Dorsolateral prefrontal cortex (tissue), 120 donors: ENCODE measurements at regions of chr20 and their contacts with region 1.

Region 1: GRCh38 chr20:50575847-50576720 is 65.9 kb downstream of the PTPN1 start:
- DNase-seq: peak in 9 of 10 donors; percentile 54 to 79 (median 75)
- H3K4me3 ChIP-seq: no peak overlapping the region
- H3K27ac ChIP-seq: peak overlapping the region in 30 of 59 donors; percentile 15 to 79 (median 41)
- H3K27me3 ChIP-seq: no peaks in the 10 kb centered on the region
- CTCF ChIP-seq: peak; percentile 44 to 86 (median 74)

Region 2: GRCh38 chr20:50395258-50395729 is 180.8 kb before region 1 on chr20:
- intact Hi-C with region 1: loop called in 1 of 2 experiments (anchors 10 kb)
- DNase-seq: peak in 1 of 10 donors; percentile 52
- H3K4me3 ChIP-seq: no peak overlapping the region
- H3K27ac ChIP-seq: peak overlapping the region in 37 of 59 donors; percentile 6 to 82 (median 46)
- H3K27me3 ChIP-seq: no peaks in the 10 kb centered on the region
- CTCF ChIP-seq: no peak

Region 3: DNA sequence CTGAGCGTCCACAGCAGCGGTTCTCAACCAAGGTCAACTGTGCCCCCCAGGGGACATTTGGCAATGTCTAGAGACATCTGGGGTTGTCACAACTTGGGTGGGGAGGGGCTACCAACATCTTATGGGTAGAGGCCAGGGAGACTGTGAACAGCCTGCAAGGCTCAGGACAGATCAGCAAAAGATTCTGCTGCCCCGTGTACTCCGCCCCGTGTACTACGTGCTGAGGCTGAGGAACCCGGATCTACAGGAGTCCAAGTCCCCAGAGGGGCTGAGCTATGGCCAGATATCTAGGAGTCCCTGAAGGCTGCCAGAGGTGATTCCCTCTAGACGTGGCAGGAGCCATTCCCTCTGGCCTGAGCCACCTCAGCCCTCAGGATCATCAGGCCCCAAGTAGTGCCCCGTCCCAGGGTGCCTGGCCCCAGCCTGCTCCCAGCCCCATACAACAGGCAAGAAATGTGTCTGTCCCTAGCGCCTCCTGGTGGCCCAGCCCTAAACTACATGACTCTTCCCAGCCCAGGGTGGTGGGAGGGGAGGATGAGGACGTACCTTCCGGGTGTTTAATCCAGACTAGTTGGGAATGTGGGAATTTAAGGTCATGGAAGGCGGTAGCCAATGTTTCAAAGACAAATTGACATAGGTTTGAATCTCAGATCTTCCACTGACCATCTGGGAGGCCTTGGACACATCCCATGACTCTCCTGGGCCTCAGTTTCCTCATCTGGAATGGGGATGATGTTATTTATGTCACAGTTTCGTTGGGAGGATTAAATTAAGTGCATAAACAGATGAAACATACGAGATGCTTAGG is 115.4 kb before region 1 on chr20:
- intact Hi-C with region 1: loop called in 1 of 2 experiments (anchors 5 kb)
- DNase-seq: peak; percentile 25 to 87 (median 78)
- H3K4me3 ChIP-seq: no peak overlapping the region
- H3K27ac ChIP-seq: peak overlapping the region in 5 of 59 donors; percentile 9 to 53 (median 21)
- H3K27me3 ChIP-seq: no peaks in the 10 kb centered on the region
- CTCF ChIP-seq: peak; percentile 72 to 94 (median 88)

Region 4: DNA sequence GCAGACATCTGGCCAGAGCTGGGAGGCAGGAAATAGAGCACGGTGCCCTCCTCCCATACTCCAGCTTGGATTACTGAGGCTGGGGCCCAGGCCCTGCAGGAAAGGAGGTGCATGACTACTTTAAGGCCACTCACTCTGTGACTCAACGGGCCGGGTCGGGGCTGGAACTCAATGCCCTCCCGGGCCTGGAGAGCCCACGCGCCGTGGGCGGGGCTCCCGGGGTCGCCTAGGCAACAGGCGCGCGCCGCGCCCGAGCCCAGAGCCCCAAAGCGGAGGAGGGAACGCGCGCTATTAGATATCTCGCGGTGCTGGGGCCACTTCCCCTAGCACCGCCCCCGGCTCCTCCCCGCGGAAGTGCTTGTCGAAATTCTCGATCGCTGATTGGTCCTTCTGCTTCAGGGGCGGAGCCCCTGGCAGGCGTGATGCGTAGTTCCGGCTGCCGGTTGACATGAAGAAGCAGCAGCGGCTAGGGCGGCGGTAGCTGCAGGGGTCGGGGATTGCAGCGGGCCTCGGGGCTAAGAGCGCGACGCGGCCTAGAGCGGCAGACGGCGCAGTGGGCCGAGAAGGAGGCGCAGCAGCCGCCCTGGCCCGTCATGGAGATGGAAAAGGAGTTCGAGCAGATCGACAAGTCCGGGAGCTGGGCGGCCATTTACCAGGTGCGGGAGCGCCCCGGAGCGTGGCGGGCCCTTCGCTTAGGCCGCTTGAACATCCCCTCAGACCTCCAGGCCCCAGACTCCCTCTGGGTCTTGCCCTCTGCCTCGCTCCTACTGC is 66.0 kb before region 1 on chr20 and contains the start of gene PTPN1:
- intact Hi-C with region 1: loop called (anchors 2 to 5 kb)
- DNase-seq: peak; percentile 96 to 99 (median 98)
- H3K4me3 ChIP-seq: peak within 1 kb of the TSS; percentile 48 to 100 (median 98)
- H3K27ac ChIP-seq: peak within 1 kb of the TSS in 56 of 59 donors; percentile 0 to 96 (median 76)
- H3K27me3 ChIP-seq: no peaks in the 10 kb centered on the region
- CTCF ChIP-seq: peak in 34 of 56 donors; percentile 5 to 58 (median 28)
- total RNA-seq, gene PTPN1: 15.9 to 29.2 (median 22.0) TPM

Region 5: GRCh38 chr20:50731055-50731871 is 155.2 kb after region 1 on chr20 and contains the start of gene PARD6B:
- intact Hi-C with region 1: no loop called
- DNase-seq: peak; percentile 93 to 99 (median 97)
- H3K4me3 ChIP-seq: peak within 1 kb of the TSS; percentile 47 to 97 (median 88)
- H3K27ac ChIP-seq: peak within 1 kb of the TSS in 55 of 59 donors; percentile 20 to 86 (median 72)
- H3K27me3 ChIP-seq: no peaks in the 10 kb centered on the region
- CTCF ChIP-seq: peak in 19 of 56 donors; percentile 5 to 50 (median 17)
- total RNA-seq, gene PARD6B: 2.6 to 11.1 (median 5.6) TPM